Activated CD4-positive, alpha-beta memory T cell treated with anti-CD3 and anti-CD28 coated beads for 36 hours (primary cell): ENCODE measurements at regions of chr17 and their contacts with region 1.

Region 1: GRCh38 chr17:48259694-48260291 is 152.2 kb downstream of the SNX11 start:
- DNase-seq: no peak
- H3K4me3 Mint-ChIP-seq: no peak overlapping the region
- H3K27ac Mint-ChIP-seq: no peak overlapping the region
- H3K4me1 Mint-ChIP-seq: peaks cover 13% of the 10 kb centered on the region
- H3K27me3 Mint-ChIP-seq: no peaks in the 10 kb centered on the region

Region 2: DNA sequence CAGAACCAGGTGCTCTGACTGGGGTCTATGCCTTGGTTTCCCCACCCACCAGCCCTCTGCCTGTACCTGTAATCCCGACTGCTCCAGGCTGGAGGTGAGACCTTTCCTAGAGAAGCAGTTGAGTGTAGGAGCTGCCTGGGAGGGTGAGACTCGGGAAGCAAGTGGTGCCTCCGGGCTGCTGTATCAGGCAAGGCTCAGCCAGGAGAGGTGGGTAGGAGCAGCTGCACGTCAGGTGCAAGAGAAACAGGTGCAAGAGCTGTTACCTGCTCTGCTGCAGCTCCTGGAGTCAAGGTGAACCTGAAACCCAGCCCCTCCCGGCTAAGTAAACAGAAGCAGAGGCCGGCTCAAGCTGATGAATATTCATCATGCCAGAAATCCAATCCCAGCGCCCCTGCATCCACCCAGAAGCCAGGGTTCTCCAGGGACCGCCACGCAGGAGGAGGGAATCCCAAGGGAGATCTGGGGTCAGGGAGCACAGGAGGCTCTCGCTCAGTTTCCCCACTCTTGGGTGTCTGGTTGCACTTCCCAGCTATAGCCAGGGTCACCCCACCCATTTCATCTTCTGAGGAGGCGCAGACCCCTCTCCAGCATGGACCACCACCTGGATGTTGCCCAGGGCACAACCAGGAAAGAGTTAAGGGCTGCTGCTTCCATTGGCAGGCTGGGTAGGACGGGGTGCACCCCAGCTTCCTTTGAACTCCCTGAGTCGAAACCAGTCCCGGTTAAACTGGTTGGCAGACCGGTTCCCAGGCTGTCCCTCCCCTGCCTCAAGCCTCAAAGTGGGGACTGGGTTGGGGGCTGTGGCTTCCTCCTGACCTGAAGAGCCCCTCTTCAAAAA is 302.0 kb before region 1 on chr17 and contains the start of gene PRR15L:
- CTCF ChIA-PET with region 1: no interaction called
- POLR2A ChIA-PET with region 1: no interaction called
- intact Hi-C with region 1: no loop called
- DNase-seq: no peak
- H3K4me3 Mint-ChIP-seq: no peak within 1 kb of the TSS
- H3K27ac Mint-ChIP-seq: no peak within 1 kb of the TSS
- H3K4me1 Mint-ChIP-seq: no peaks in the 10 kb centered on the region
- H3K27me3 Mint-ChIP-seq: no peaks in the 10 kb centered on the region
- total RNA-seq, gene PRR15L: not detected

Region 3: DNA sequence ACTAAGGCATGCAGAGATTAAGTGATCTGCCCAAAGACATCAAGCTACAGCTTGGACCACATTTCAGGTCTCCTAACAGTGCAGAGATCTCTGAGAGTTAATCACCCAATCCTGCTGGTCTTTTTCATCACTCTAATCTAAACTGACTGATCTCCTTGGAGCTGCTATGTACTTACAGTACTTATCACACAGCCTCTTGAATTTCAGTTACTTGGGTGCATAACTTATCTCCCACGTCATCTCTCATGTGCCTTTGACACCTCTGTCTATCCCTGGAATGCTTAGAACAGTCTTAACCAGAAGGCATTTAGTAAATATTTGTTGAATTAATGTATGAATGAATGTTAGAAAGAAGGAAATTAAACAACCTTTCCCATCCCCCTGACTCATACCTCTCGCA is 13.2 kb before region 1 on chr17:
- CTCF ChIA-PET with region 1: interaction called, 25 read pairs
- POLR2A ChIA-PET with region 1: no interaction called
- intact Hi-C with region 1: no loop called
- DNase-seq: no peak
- H3K4me3 Mint-ChIP-seq: no peak overlapping the region
- H3K27ac Mint-ChIP-seq: no peak overlapping the region
- H3K4me1 Mint-ChIP-seq: peaks cover 47% of the 10 kb centered on the region
- H3K27me3 Mint-ChIP-seq: no peaks in the 10 kb centered on the region

Region 4: GRCh38 chr17:48295362-48296288 is 35.8 kb after region 1 on chr17:
- CTCF ChIA-PET with region 1: interaction called, 7 read pairs
- POLR2A ChIA-PET with region 1: interaction called, 5 read pairs
- intact Hi-C with region 1: loop called (anchors 5 kb)
- DNase-seq: no peak
- H3K4me3 Mint-ChIP-seq: peak overlapping the region; percentile 59
- H3K27ac Mint-ChIP-seq: peak overlapping the region; percentile 92
- H3K4me1 Mint-ChIP-seq: peaks cover 66% of the 10 kb centered on the region
- H3K27me3 Mint-ChIP-seq: no peaks in the 10 kb centered on the region

Region 5: DNA sequence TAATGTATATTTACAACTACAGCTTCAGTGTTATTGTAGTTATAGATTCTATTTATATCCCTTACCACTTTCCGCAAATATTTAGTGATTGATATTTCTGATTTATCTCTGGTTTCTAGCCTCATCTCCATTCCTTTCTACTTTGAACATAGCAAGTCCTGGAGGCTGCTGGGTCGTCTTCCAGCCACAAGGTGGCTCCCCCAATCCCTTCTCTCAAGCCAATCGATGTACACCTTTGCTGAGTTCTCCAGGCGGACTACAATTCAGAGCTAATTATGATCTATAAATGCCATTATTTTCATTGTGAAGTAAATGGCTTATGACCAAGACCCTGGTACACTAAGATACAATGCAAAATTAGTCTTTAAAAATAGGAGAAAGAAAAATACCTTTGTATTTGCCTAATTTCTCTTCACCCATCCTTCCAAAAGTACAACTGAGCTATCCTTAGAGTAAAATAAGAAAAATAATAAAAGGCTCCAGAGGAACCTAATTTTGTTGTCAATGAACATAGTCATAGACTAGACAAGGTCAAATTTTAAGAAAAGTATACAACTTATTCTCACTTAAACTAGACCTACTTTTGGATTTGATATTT is 48.1 kb after region 1 on chr17:
- CTCF ChIA-PET with region 1: interaction called, 23 read pairs
- POLR2A ChIA-PET with region 1: no interaction called
- intact Hi-C with region 1: no loop called
- DNase-seq: peak; percentile 66
- H3K4me3 Mint-ChIP-seq: no peak overlapping the region
- H3K27ac Mint-ChIP-seq: no peak overlapping the region
- H3K4me1 Mint-ChIP-seq: peaks cover 11% of the 10 kb centered on the region
- H3K27me3 Mint-ChIP-seq: no peaks in the 10 kb centered on the region

Region 6: GRCh38 chr17:48577330-48577945 is 317.6 kb after region 1 on chr17:
- CTCF ChIA-PET with region 1: no interaction called
- POLR2A ChIA-PET with region 1: no interaction called
- intact Hi-C with region 1: no loop called
- DNase-seq: peak; percentile 30
- H3K4me3 Mint-ChIP-seq: peak overlapping the region; percentile 76
- H3K27ac Mint-ChIP-seq: peak overlapping the region; percentile 56
- H3K4me1 Mint-ChIP-seq: peaks cover 35% of the 10 kb centered on the region
- H3K27me3 Mint-ChIP-seq: peaks cover 36% of the 10 kb centered on the region